ENCODE measurements at regions of chr11 and their contacts with region 1.

Region 1: GRCh38 chr11:87281496-87281895 is 243.8 kb downstream of the TMEM135 start:
- DNase-seq: no peak
- ATAC-seq: peak; percentile 89

Region 2: GRCh38 chr11:86940122-86940777 is 341.2 kb before region 1 on chr11:
- intact Hi-C with region 1: loop called (anchors 10 kb)
- DNase-seq: peak; percentile 66
- ATAC-seq: peak; percentile 89

Measured in sciatic nerve (tissue), 2 donors.